ENCODE measurements at regions of chr6 and their contacts with region 1.

Region 1: DNA sequence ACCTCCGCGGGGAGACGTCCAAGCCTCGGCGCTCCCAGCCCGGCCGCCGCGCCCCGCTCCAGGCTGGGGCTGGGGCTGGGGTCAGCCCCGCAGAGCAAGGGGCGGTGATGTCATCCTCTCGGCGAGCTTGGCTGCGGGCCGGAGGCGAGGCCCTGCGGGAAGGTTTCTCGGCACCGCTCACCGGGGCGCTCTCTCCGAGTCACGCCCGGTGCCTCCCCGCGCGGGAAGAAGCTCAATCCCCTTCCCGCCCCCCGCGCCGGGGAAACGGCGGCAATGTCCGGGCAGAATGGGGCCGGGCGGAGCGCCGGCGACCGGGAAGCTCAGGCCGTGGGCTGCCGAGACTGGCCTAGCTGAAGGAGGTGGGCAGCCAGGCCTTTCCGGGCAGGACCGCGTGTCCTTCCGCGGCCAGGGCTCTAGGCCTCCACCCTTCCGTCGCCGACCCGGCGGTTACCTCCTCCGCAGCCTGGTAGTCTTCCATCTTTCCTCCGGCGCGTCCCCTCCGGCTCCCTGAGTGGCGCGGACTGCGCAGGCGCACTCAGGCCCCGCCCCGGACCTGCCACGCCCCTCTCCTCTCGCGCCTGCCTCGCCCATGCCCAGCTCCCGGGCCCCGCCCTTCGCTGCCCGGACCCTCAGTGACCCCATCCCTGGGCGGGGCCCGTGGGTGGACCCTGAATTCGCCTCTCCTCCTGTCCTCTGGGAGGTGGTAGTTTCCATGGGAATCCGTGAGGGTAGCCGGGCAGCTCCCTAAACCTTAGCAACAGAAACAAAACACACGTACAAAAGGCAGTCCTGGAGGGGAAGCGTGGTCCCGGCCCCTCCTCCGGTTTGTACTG is at the start of gene DYNLT1:
- DNase-seq: peak; percentile 92
- H3K4me3 Mint-ChIP-seq: peak within 1 kb of the TSS; percentile 100
- H3K27ac Mint-ChIP-seq: peak within 1 kb of the TSS; percentile 97
- H3K4me1 Mint-ChIP-seq: peaks cover 75% of the 10 kb centered on the region
- H3K27me3 Mint-ChIP-seq: no peaks in the 10 kb centered on the region
- total RNA-seq, gene DYNLT1: 130 to 133 TPM

Region 2: DNA sequence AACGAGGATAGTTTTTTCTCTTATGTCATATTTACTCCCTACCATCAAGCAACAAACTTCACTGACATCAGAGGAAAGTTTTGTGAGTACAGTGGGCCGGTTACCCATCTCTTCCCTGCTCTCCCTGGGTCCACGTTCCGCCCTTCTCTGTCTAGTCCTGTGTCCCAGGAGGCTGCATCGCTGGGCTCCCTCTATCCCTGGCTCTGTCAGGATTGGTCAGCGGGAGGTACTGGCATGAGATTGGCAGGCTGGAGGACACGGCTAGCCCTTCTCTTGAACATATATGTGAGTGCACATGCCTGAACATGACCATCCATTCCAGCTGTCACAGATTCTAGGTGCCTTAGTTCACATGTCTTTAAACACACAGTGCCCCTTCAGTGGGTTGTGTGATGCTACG is 114.8 kb before region 1 on chr6:
- CTCF ChIA-PET with region 1: no interaction called
- POLR2A ChIA-PET with region 1: no interaction called
- DNase-seq: no peak
- H3K4me3 Mint-ChIP-seq: no peak overlapping the region
- H3K27ac Mint-ChIP-seq: no peak overlapping the region
- H3K4me1 Mint-ChIP-seq: no peaks in the 10 kb centered on the region
- H3K27me3 Mint-ChIP-seq: peaks cover 50% of the 10 kb centered on the region

Region 3: DNA sequence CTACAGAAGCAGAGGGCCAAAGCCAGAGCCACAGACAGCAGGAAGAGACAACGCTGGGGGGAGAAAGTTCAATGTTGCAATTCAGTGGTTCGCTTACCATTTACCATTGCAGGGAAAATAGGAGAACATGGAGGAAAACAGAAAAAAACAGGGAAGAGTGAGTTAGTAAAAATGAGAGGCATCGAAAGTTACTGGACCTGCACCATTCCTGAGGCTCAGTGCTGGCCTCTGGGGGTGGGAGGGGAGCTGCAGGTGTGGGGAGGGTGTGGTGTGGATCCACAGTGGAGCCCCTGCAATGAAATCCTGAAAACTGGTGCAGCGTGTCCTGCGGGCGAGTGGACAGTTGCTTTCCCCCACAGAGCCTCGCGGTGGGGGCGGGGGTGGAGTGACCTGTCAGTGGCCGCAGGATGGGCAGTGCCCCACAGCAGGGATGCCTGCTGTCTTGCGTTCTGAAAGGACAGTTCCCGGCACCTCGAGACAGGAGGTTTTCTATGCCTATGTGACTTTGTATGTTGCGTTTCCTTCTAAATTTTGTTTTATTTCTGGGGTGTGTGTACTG is 78.9 kb before region 1 on chr6:
- CTCF ChIA-PET with region 1: interaction called, 4 read pairs
- POLR2A ChIA-PET with region 1: interaction called, 27 read pairs
- DNase-seq: no peak
- H3K4me3 Mint-ChIP-seq: peak overlapping the region; percentile 62
- H3K27ac Mint-ChIP-seq: peak overlapping the region; percentile 94
- H3K4me1 Mint-ChIP-seq: peaks cover 91% of the 10 kb centered on the region
- H3K27me3 Mint-ChIP-seq: no peaks in the 10 kb centered on the region

Region 4: GRCh38 chr6:158631678-158632537 is 12.5 kb before region 1 on chr6:
- CTCF ChIA-PET with region 1: interaction called, 5 read pairs
- POLR2A ChIA-PET with region 1: interaction called, 192 read pairs
- DNase-seq: peak; percentile 11
- H3K4me3 Mint-ChIP-seq: no peak overlapping the region
- H3K27ac Mint-ChIP-seq: peak overlapping the region; percentile 58
- H3K4me1 Mint-ChIP-seq: peaks cover 57% of the 10 kb centered on the region
- H3K27me3 Mint-ChIP-seq: no peaks in the 10 kb centered on the region

Measured in activated CD4-positive, alpha-beta memory T cell treated with anti-CD3 and anti-CD28 coated beads, Interleukin-2, amount 10 ng/mL, durations not matched to agents 7 days and 5 days (primary cell).